ENCODE measurements at regions of chr12 and their contacts with region 1.

Region 1: DNA sequence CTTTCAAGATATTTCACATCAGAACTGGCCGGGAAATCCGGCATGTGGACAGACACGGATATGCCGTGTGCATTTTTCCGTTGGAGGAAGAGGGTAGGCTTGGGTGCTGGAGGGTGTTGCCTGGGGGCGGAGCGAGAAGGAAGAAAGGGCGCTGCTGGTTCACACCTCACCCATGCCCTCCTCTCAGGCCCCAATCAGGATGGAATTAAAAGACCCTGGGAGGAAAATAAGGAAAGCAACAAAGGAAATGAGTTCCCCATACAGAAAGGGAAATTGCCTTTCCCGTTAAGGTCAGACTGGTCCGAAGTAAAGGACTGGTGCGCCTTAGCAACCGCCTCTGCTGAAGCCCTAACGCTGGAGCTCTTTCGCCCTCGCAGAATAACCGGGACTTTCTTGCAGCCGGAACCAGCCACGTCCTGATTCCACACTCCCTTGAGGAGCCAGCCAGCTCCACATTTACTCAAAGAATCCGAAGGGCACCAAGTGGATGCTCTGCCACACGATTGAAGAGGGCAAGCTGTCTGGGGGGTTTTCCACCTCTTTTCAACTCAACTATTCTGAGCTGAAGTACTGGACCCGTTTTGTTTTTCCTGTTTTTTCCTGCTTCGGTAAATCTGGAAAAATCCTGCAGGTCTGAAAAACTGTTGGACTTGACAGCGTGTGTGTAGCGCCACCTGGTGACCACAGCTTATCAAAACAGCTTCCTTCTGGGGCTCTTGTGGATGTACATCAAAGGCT is 37.7 kb upstream of the BCL2L14 start:
- DNase-seq: peak; percentile 34
- ATAC-seq: peak; percentile 72
- H3K4me3 Mint-ChIP-seq: peak overlapping the region; percentile 78
- H3K27ac Mint-ChIP-seq: peak overlapping the region; percentile 41
- H3K4me1 Mint-ChIP-seq: peaks cover 16% of the 10 kb centered on the region
- H3K27me3 Mint-ChIP-seq: peaks cover 5% of the 10 kb centered on the region
- CTCF ChIP-seq: peak; percentile 70

Region 2: GRCh38 chr12:10771132-10771733 is 1261.8 kb before region 1 on chr12:
- CTCF ChIA-PET with region 1: interaction called, 5 read pairs
- POLR2A ChIA-PET with region 1: no interaction called
- intact Hi-C with region 1: loop called (anchors 10 kb)
- DNase-seq: no peak
- ATAC-seq: peak; percentile 54
- H3K4me3 Mint-ChIP-seq: no peak overlapping the region
- H3K27ac Mint-ChIP-seq: no peak overlapping the region
- H3K4me1 Mint-ChIP-seq: no peaks in the 10 kb centered on the region
- H3K27me3 Mint-ChIP-seq: peaks cover 17% of the 10 kb centered on the region
- CTCF ChIP-seq: no peak

Region 3: DNA sequence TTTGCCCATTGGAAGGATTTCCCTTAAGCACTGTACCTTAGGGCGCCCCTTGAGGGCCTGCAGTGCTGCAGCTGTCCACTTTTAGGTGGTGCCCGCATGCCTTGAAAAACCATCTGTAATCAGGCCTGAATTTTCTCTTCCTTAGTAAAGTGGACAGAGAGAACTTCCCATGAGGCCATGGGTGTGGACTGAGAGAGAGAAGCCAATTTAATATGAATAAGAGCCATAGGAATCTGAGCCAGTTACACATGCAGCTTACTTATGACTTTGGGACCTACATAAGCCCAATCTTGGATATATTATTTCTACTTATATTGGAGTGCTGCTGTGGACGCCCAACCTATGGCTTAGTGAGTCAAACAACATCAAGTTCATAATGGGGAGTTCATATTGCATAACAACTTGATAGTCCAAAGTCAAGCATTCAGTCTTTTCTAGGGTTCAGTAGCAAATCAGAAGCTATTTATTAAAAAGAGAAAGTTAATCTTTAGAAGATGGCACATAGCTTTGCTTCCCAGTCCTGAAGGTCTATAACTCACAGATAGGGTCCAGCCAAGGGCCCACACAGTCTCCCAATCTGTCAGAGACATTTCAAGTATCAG is 394.6 kb before region 1 on chr12:
- CTCF ChIA-PET with region 1: interaction called, 11 read pairs
- POLR2A ChIA-PET with region 1: interaction called, 8 read pairs
- intact Hi-C with region 1: no loop called
- DNase-seq: no peak
- ATAC-seq: no peak
- H3K4me3 Mint-ChIP-seq: no peak overlapping the region
- H3K27ac Mint-ChIP-seq: no peak overlapping the region
- H3K4me1 Mint-ChIP-seq: peaks cover 12% of the 10 kb centered on the region
- H3K27me3 Mint-ChIP-seq: no peaks in the 10 kb centered on the region
- CTCF ChIP-seq: no peak

Region 4: GRCh38 chr12:11758510-11759493 is 274.2 kb before region 1 on chr12:
- CTCF ChIA-PET with region 1: interaction called, 15 read pairs
- POLR2A ChIA-PET with region 1: interaction called, 12 read pairs
- intact Hi-C with region 1: no loop called
- DNase-seq: no peak
- ATAC-seq: peak; percentile 74
- H3K4me3 Mint-ChIP-seq: peak overlapping the region; percentile 59
- H3K27ac Mint-ChIP-seq: peak overlapping the region; percentile 91
- H3K4me1 Mint-ChIP-seq: peaks cover 72% of the 10 kb centered on the region
- H3K27me3 Mint-ChIP-seq: no peaks in the 10 kb centered on the region
- CTCF ChIP-seq: no peak

Region 5: GRCh38 chr12:11836282-11837151 is 196.5 kb before region 1 on chr12:
- CTCF ChIA-PET with region 1: interaction called, 17 read pairs
- POLR2A ChIA-PET with region 1: no interaction called
- intact Hi-C with region 1: loop called (anchors 1 kb)
- DNase-seq: peak; percentile 73
- ATAC-seq: peak; percentile 94
- H3K4me3 Mint-ChIP-seq: peak overlapping the region; percentile 73
- H3K27ac Mint-ChIP-seq: peak overlapping the region; percentile 95
- H3K4me1 Mint-ChIP-seq: peaks cover 81% of the 10 kb centered on the region
- H3K27me3 Mint-ChIP-seq: no peaks in the 10 kb centered on the region
- CTCF ChIP-seq: no peak

Region 6: DNA sequence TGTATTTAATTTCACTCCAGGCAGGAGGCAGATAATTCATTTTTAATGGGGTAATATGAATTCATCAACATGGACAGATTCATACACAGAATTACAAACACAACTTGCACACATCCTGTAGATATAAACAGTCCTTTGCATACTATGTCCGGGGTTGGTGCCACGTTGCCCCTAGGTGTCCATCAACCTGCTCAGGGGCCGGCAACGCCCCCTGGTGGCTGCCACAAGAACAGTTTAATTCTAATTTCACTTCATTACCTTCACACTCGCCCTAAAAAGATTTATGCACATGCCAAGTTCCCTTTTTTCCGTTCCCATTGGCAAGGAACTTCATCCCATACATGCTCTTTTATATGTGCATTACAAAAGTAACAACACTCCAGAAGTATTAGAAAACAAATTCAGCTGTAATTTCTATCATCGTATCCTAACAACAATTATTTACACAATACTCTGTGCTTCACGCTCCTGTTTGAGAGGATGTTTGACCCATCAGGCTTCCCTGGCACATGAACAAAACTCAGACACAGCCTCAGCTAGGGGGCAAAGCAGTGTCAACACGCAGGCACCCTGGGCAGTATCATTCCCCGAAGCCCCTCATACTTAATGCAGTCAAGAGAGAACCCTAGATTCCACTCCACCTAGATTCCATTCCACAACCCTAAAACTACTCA is 301.5 kb after region 1 on chr12:
- CTCF ChIA-PET with region 1: no interaction called
- POLR2A ChIA-PET with region 1: no interaction called
- intact Hi-C with region 1: loop called (anchors 2 kb)
- DNase-seq: peak; percentile 41
- ATAC-seq: peak; percentile 72
- H3K4me3 Mint-ChIP-seq: no peak overlapping the region
- H3K27ac Mint-ChIP-seq: no peak overlapping the region
- H3K4me1 Mint-ChIP-seq: peaks cover 9% of the 10 kb centered on the region
- H3K27me3 Mint-ChIP-seq: peaks cover 2% of the 10 kb centered on the region
- CTCF ChIP-seq: peak; percentile 58

Measured in activated B cell treated with CpG ODN at 0.5 μM for 24 hours (primary cell).